CD4-positive, alpha-beta memory T cell (primary cell): ENCODE measurements at regions of chrX and their contacts with region 1.

Region 1: GRCh38 chrX:49915361-49916222 is 6.8 kb upstream of the CLCN5 start:
- DNase-seq: peak; percentile 52 to 58 (median 53)
- H3K4me3 ChIP-seq: no peak overlapping the region
- H3K4me3 Mint-ChIP-seq: no peak overlapping the region
- H3K27ac ChIP-seq: no peak overlapping the region
- H3K27ac Mint-ChIP-seq: no peak overlapping the region
- H3K4me1 ChIP-seq: no peaks in the 10 kb centered on the region
- H3K4me1 Mint-ChIP-seq: peaks cover 0 to 2% (median under 1%) of the 10 kb centered on the region in 4 donors
- H3K27me3 ChIP-seq: no peaks in the 10 kb centered on the region
- H3K27me3 Mint-ChIP-seq: no peaks in the 10 kb centered on the region

Region 2: GRCh38 chrX:49710729-49711304 is 204.8 kb before region 1 on chrX:
- CTCF ChIA-PET with region 1: no interaction called
- POLR2A ChIA-PET with region 1: no interaction called
- intact Hi-C with region 1: no loop called
- DNase-seq: no peak
- H3K4me3 ChIP-seq: no peak overlapping the region
- H3K4me3 Mint-ChIP-seq: no peak overlapping the region
- H3K27ac ChIP-seq: no peak overlapping the region
- H3K27ac Mint-ChIP-seq: no peak overlapping the region
- H3K4me1 ChIP-seq: no peaks in the 10 kb centered on the region
- H3K4me1 Mint-ChIP-seq: no peaks in the 10 kb centered on the region
- H3K27me3 ChIP-seq: no peaks in the 10 kb centered on the region
- H3K27me3 Mint-ChIP-seq: peaks cover 2 to 3% of the 10 kb centered on the region in 2 donors

Region 3: GRCh38 chrX:50045823-50046222 is 130.2 kb after region 1 on chrX:
- CTCF ChIA-PET with region 1: no interaction called
- POLR2A ChIA-PET with region 1: no interaction called
- intact Hi-C with region 1: no loop called
- DNase-seq: no peak
- H3K4me3 ChIP-seq: no peak overlapping the region
- H3K4me3 Mint-ChIP-seq: no peak overlapping the region
- H3K27ac ChIP-seq: no peak overlapping the region
- H3K27ac Mint-ChIP-seq: no peak overlapping the region
- H3K4me1 ChIP-seq: no peaks in the 10 kb centered on the region
- H3K4me1 Mint-ChIP-seq: no peaks in the 10 kb centered on the region
- H3K27me3 ChIP-seq: no peaks in the 10 kb centered on the region
- H3K27me3 Mint-ChIP-seq: no peaks in the 10 kb centered on the region

Region 4: DNA sequence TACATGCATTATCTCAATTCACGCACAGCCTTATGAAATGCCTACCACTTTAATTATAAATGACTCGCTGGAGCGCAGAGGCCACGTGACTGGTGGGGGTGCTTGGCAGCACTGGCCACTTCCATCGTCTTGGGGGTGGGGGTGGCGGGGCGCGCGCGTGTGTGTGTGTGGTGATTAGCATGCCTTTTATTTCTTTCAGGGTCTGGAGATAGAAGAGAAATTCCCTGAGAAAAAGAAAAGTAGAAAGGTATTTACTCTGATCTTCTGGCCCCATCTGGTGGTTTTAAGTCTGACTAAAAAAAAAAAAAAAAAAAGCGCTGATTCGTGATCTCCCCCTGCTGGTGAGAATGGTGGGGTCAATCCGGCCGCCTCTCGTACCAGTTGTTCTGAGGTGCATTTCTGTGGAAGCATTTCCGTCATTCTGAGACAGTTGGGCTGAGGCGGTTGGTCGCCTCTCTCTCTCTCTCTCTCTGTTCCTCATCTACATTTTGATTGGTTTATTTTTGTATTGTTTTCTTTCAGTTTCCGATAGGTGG is 288.8 kb after region 1 on chrX and contains the start of gene CCNB3:
- CTCF ChIA-PET with region 1: interaction called, 4 read pairs
- POLR2A ChIA-PET with region 1: no interaction called
- intact Hi-C with region 1: loop called (anchors 2 kb)
- DNase-seq: peak; percentile 73 to 84 (median 82)
- H3K4me3 ChIP-seq: peak within 1 kb of the TSS in 1 of 2 donors; percentile 24
- H3K4me3 Mint-ChIP-seq: peak within 1 kb of the TSS; percentile 71 to 92 (median 84)
- H3K27ac ChIP-seq: peak within 1 kb of the TSS; percentile 21
- H3K27ac Mint-ChIP-seq: peak within 1 kb of the TSS; percentile 71 to 96 (median 85)
- H3K4me1 ChIP-seq: peaks cover 6% of the 10 kb centered on the region
- H3K4me1 Mint-ChIP-seq: peaks cover 5 to 20% (median 9%) of the 10 kb centered on the region in 4 donors
- H3K27me3 ChIP-seq: no peaks in the 10 kb centered on the region
- H3K27me3 Mint-ChIP-seq: no peaks in the 10 kb centered on the region
- total RNA-seq, gene CCNB3: 0.09 to 0.17 TPM

Region 5: GRCh38 chrX:50889582-50889981 is 974.0 kb after region 1 on chrX:
- CTCF ChIA-PET with region 1: no interaction called
- POLR2A ChIA-PET with region 1: no interaction called
- intact Hi-C with region 1: no loop called
- DNase-seq: no peak
- H3K4me3 ChIP-seq: no peak overlapping the region
- H3K4me3 Mint-ChIP-seq: no peak overlapping the region
- H3K27ac ChIP-seq: no peak overlapping the region
- H3K27ac Mint-ChIP-seq: no peak overlapping the region
- H3K4me1 ChIP-seq: no peaks in the 10 kb centered on the region
- H3K4me1 Mint-ChIP-seq: no peaks in the 10 kb centered on the region
- H3K27me3 ChIP-seq: no peaks in the 10 kb centered on the region
- H3K27me3 Mint-ChIP-seq: peaks cover 0 to 3% of the 10 kb centered on the region in 2 donors